GM12878 (cell line): ENCODE measurements at regions of chr17 and their contacts with region 1.

Region 1: DNA sequence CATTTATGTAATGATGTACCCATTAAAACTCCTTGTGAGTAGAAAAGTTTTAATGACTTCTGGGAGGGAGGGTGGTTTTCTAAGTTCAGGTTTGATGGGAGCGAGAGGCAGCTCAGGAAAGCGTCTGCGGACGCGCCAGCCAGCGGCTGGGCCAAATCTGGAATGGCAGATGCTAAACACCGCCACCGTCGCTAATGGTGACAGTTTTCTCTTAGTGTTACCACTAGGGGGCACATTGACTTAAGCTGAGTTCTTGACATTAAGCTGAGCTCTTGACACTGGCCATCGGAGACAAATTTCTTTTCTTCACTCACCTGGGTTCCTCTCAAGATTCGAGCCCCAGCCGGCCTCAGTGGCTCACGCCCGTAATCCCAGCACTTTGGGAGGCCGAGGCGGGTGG is 6.7 kb downstream of the TRPV1 start:
- DNase-seq: no peak
- ATAC-seq: peak; percentile 88
- H3K4me3 ChIP-seq: no peak overlapping the region
- H3K27ac ChIP-seq: no peak overlapping the region
- H3K4me1 ChIP-seq: no peaks in the 10 kb centered on the region
- H3K27me3 ChIP-seq: no peaks in the 10 kb centered on the region
- CTCF ChIP-seq: peak; percentile 40 to 69 (median 47)
- EP300 ChIP-seq: no peak
- POLR2A ChIP-seq: no peak
- RAD21 ChIP-seq: 0 out of 2 replicates have a peak, but pooled peaks have one; percentile 23

Region 2: DNA sequence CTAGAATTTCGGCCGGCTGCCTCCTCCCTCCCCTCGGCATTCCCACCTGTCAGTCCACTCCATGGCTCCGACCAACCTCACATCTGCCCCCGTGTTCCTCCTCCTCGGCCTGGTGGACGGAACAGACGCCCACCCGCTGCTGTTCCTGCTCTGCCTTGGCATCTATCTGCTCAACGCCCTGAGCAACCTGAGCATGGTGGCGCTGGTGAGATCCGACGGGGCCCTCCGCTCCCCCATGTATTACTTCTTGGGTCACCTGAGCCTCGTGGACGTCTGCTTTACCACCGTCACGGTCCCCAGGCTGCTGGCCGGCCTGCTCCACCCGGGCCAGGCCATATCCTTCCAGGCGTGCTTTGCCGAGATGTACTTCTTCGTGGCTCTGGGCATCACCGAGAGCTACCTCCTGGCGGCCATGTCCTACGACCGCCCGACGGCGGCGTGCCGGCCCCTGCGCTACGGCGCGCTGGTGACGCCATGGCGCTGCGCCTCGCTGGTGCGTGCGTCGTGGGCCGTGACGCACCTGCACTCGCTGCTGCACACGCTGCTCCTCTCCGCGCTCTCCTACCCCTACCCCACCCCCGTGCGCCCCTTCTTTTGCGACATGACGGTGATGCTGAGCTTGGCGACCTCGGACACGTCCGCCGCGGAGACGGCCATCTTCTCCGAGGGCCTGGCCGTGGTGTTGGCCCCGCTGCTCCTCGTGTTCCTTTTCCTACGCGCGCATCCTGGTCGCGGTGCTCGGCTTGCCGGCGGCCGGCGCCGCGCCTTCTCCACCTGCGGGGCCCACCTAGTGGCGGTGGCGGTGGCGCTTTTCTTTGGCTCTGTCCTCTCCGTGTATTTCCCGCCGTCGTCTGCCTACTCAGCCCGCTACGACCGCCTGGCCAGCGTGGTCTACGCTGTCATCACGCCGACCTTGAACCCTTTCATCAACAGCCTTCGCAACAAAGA is 216.4 kb before region 1 on chr17 and contains the start of gene OR3A2:
- CTCF ChIA-PET with region 1: no interaction called
- POLR2A ChIA-PET with region 1: no interaction called
- RAD21 ChIA-PET with region 1: no interaction called
- SMC1A ChIA-PET with region 1: no interaction called
- in situ Hi-C with region 1: no loop called
- intact Hi-C with region 1: no loop called
- DNase-seq: no peak
- ATAC-seq: no peak
- H3K4me3 ChIP-seq: no peak within 1 kb of the TSS
- H3K27ac ChIP-seq: no peak within 1 kb of the TSS
- H3K4me1 ChIP-seq: no peaks in the 10 kb centered on the region
- H3K27me3 ChIP-seq: no peaks in the 10 kb centered on the region
- CTCF ChIP-seq: no peak
- EP300 ChIP-seq: no peak
- POLR2A ChIP-seq: peak; percentile 31; the same call in 1 of the 2 replicates
- RAD21 ChIP-seq: no peak
- polyA plus RNA-seq, gene OR3A2: not detected

Region 3: GRCh38 chr17:3558603-3559269 is 43.8 kb before region 1 on chr17:
- CTCF ChIA-PET with region 1: interaction called, 8 read pairs
- POLR2A ChIA-PET with region 1: no interaction called
- RAD21 ChIA-PET with region 1: interaction called, 6 read pairs
- SMC1A ChIA-PET with region 1: interaction called, 10 read pairs
- in situ Hi-C with region 1: no loop called
- intact Hi-C with region 1: no loop called
- DNase-seq: peak; percentile 87
- ATAC-seq: peak; percentile 74
- H3K4me3 ChIP-seq: peak overlapping the region; percentile 28; the same call in 1 of the 2 replicates
- H3K27ac ChIP-seq: peak overlapping the region; percentile 92
- H3K4me1 ChIP-seq: peaks cover 51% of the 10 kb centered on the region
- H3K27me3 ChIP-seq: no peaks in the 10 kb centered on the region
- CTCF ChIP-seq: no peak
- EP300 ChIP-seq: peak; percentile 89 to 92
- POLR2A ChIP-seq: peak; percentile 97
- RAD21 ChIP-seq: no peak

Region 4: DNA sequence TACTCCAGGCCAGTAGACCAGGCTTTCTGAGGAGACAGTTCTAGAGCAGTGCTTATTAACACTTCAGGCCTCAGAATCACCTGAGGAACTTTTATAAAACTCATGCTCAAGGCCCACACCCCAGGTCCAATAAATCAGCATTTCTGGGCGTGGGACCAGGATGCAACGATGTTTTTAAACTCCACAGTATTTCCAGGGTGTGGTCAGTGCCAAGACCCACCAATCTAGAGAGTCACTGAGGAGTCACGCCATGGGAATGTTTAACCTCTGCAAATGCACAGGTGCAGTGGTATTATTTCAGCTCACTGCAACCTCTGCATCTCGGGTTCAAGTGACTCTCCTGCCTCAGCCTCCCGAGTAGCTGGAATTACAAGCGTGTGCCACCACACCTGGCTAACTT is 10.6 kb after region 1 on chr17:
- CTCF ChIA-PET with region 1: interaction called, 14 read pairs
- POLR2A ChIA-PET with region 1: no interaction called
- RAD21 ChIA-PET with region 1: no interaction called
- SMC1A ChIA-PET with region 1: no interaction called
- in situ Hi-C with region 1: no loop called
- intact Hi-C with region 1: no loop called
- DNase-seq: no peak
- ATAC-seq: no peak
- H3K4me3 ChIP-seq: no peak overlapping the region
- H3K27ac ChIP-seq: no peak overlapping the region
- H3K4me1 ChIP-seq: no peaks in the 10 kb centered on the region
- H3K27me3 ChIP-seq: no peaks in the 10 kb centered on the region; a peak in 1 of 4 replicates
- CTCF ChIP-seq: no peak
- EP300 ChIP-seq: no peak
- POLR2A ChIP-seq: no peak
- RAD21 ChIP-seq: no peak

Region 5: GRCh38 chr17:3647769-3648555 is 45.5 kb after region 1 on chr17:
- CTCF ChIA-PET with region 1: interaction called, 14 read pairs
- POLR2A ChIA-PET with region 1: no interaction called
- RAD21 ChIA-PET with region 1: no interaction called
- SMC1A ChIA-PET with region 1: interaction called, 8 read pairs
- in situ Hi-C with region 1: no loop called
- intact Hi-C with region 1: loop called (anchors 2 kb)
- DNase-seq: no peak
- ATAC-seq: peak; percentile 87
- H3K4me3 ChIP-seq: no peak overlapping the region
- H3K27ac ChIP-seq: no peak overlapping the region
- H3K4me1 ChIP-seq: peaks cover 4% of the 10 kb centered on the region
- H3K27me3 ChIP-seq: no peaks in the 10 kb centered on the region
- CTCF ChIP-seq: peak; percentile 48 to 63 (median 49)
- EP300 ChIP-seq: no peak
- POLR2A ChIP-seq: no peak
- RAD21 ChIP-seq: peak; percentile 40